Dendritic cell treated with granulocyte-macrophage colony-stimulating factor and Interleukin-4, amounts not matched to agents 40 ng/mL and 50 ng/mL, for 4 days (primary cell): ENCODE measurements at regions of chr9 and their contacts with region 1.

Region 1: GRCh38 chr9:91346652-91347051 is 15.1 kb downstream of the AUH start:
- H3K4me3 Mint-ChIP-seq: no peak overlapping the region
- H3K27ac Mint-ChIP-seq: peak overlapping the region; percentile 57
- H3K4me1 Mint-ChIP-seq: peaks cover 46% of the 10 kb centered on the region
- H3K27me3 Mint-ChIP-seq: no peaks in the 10 kb centered on the region

Region 2: DNA sequence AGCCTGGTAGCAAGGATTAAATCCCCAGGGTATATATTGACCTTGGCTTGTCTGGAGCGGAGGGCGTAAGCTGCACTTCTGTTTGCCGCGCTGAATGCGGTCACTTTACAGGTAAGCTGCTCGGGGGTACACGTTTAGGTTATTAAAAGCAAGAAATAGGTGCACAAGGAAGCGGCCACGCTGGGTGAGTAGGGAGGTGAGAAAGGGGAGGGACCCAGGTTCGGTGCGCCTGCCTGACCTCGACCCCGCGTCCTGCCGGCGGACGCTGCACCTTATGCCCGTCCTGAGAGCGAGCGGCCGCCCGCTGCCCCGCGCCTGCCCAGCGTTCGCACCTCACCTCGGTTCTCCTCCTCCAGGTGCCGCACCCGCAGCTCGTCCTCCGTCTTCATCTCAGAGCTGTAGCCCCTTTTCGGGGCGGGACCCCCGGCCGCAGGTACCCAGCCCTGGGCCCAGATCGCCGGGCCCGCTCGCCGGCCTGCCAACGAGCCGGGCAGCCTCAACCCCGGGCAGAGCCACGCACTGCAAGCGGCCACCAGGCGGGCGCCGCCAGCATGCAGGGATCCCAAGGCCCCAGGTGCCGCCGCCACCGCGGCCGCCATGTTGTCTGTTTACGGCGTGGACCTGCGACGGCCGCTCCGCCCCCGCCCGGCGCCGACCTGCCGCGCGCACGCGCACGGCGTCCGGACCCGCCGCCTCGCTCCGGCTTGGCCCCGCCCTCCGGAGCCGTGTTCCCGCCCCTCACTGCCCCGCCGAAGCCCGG is 14.8 kb after region 1 on chr9 and contains the start of gene AUH:
- intact Hi-C with region 1: loop called (anchors 1 kb)
- H3K4me3 Mint-ChIP-seq: peak within 1 kb of the TSS; percentile 95
- H3K27ac Mint-ChIP-seq: peak within 1 kb of the TSS; percentile 96
- H3K4me1 Mint-ChIP-seq: peaks cover 44% of the 10 kb centered on the region
- H3K27me3 Mint-ChIP-seq: no peaks in the 10 kb centered on the region